ENCODE measurements at regions of chr10 and their contacts with region 1.

Region 1: DNA sequence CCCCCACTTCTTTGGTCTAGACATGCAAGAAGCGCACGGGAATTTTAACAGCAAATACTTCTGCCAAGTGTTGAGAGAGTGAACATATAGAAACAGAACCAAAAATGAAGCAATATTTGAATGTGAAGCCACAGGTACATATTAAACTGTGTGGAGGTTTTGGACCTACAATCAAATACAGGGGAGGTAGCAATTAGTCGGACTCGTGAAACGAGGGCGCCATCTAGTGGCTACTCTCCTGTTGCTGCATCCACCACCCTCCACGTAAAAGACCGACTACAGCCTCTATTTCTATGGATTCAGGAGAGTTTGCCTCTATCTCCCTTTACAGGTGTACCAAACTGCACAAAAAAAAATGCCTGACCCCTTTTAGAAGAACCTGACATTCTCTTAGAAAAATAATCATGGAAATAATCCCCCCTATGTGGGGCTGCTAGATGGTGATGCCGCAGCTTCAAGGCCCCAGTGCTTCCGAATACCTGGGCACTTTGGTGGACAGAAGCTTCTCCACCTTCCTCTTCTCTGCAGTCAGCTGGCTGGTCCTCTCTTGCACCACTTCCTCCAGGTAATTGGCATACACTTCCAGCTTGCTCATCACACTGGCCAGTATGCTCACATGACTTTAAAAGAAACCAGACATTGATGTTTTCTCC is 31.7 kb downstream of the TECTB start:
- DNase-seq: peak; percentile 65 to 93 (median 85)
- H3K4me3 ChIP-seq: no peak overlapping the region
- H3K27ac ChIP-seq: no peak overlapping the region
- H3K4me1 ChIP-seq: no peaks in the 10 kb centered on the region
- H3K27me3 ChIP-seq: peaks cover 8% of the 10 kb centered on the region
- CTCF ChIP-seq: peak; percentile 82 to 95 (median 86)
- POLR2A ChIP-seq: no peak

Region 2: DNA sequence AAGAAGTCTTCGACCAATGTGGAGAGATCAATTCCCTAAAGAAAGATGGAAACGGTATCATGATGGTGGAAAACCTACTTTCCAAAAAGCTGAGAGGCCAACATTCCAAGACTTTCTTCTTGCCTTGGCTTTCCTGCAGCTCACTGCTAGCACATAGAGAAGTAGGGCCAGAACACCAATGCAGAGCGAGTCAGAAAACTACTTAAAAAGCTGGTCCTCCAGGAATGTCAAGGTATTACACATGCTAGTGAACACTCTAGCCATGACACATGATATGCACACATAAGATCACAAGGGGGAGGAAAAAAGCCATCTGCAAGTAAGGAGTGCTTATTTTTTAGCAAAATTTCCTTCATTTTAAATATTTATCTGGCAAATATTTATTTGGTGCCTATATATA is 154.1 kb before region 1 on chr10:
- intact Hi-C with region 1: loop called in 1 of 2 experiments (anchors 10 kb)
- DNase-seq: no peak
- H3K4me3 ChIP-seq: no peak overlapping the region
- H3K27ac ChIP-seq: no peak overlapping the region
- H3K4me1 ChIP-seq: no peaks in the 10 kb centered on the region
- H3K27me3 ChIP-seq: no peaks in the 10 kb centered on the region
- CTCF ChIP-seq: no peak
- POLR2A ChIP-seq: no peak

Region 3: DNA sequence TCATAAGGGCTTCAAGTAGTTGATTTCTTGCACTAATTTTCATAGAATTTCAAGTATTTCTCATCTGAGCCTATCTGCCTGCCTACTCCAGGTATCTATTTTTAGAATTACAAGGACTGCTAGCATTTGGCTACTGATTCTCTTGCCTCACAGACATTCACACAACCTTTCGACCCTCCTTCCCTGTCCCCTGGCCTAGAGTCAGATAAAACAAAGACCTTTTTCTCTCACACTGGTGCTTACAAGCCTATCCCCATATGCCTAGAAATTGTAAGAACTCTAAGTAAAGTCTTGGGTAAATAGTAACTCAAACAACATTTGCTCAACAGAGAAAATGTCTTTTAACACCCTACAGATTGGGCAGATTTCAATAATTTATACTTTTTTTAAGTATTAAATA is 137.7 kb before region 1 on chr10:
- intact Hi-C with region 1: loop called in 1 of 2 experiments (anchors 5 kb)
- DNase-seq: no peak
- H3K4me3 ChIP-seq: no peak overlapping the region
- H3K27ac ChIP-seq: no peak overlapping the region
- H3K4me1 ChIP-seq: peaks cover 6 to 10% of the 10 kb centered on the region in 2 donors
- H3K27me3 ChIP-seq: no peaks in the 10 kb centered on the region
- CTCF ChIP-seq: no peak
- POLR2A ChIP-seq: no peak

Region 4: DNA sequence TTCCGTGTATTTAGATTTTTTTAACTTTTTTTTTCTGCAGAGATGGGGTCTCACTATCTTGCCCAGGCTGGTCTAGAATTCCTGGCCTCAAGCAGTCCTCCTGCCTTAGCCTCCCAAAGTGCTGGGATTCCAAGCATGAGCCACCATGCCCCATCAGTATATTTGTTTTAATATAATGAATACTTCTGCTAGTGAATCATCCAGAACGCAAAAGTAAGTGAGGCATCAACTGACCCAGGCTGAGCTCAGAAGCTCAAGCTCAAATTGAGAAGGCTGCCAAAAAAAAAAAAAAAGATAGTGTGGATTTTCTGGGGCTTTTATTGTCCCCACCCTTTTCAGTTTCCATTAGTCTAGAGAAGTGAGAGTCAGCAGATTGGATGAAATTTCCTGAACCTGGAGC is 70.8 kb before region 1 on chr10:
- intact Hi-C with region 1: no loop called
- DNase-seq: no peak
- H3K4me3 ChIP-seq: no peak overlapping the region
- H3K27ac ChIP-seq: no peak overlapping the region
- H3K4me1 ChIP-seq: no peaks in the 10 kb centered on the region
- H3K27me3 ChIP-seq: no peaks in the 10 kb centered on the region
- CTCF ChIP-seq: no peak
- POLR2A ChIP-seq: no peak

Region 5: DNA sequence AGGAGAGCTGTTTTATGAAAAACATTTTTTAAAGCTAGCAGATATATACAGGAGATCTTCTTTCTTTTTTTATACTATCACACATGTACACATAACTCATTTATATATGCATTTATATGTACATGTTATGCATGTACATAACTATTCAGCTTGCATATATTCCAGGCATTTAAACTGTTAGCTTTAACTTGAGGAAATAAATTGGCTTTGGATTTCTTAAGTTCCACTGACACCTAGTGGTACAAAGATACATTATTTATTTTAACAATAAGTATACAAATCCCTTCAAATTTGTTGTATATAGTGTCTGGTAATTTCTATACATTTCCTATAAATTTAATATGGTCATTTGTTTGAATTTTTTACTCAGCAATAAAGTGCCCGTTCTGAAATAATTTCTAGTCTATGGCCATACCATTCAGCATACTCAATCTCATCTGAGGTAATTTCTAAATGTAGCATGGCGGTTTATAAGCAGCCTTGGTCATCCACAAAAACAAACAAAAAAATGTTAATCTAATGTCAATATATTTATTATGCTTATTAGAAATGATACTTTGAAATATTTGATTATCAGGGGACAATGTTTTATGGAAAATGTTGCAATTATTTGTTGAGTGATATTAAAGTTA is 120.2 kb after region 1 on chr10:
- intact Hi-C with region 1: loop called in 1 of 2 experiments (anchors 5 kb)
- DNase-seq: no peak
- H3K4me3 ChIP-seq: no peak overlapping the region
- H3K27ac ChIP-seq: no peak overlapping the region
- H3K4me1 ChIP-seq: no peaks in the 10 kb centered on the region
- H3K27me3 ChIP-seq: no peaks in the 10 kb centered on the region
- CTCF ChIP-seq: peak; percentile 44 to 73 (median 54)
- POLR2A ChIP-seq: no peak

Measured in adrenal gland (tissue), 19 donors.